Aorta (tissue), 5 donors: ENCODE measurements at regions of chr17 and their contacts with region 1.

Region 1: GRCh38 chr17:48024937-48025906 is 12.4 kb downstream of the COPZ2 start:
- DNase-seq: peak; percentile 99
- ATAC-seq: peak; percentile 94
- H3K4me3 ChIP-seq: no peak overlapping the region
- H3K27ac ChIP-seq: peak overlapping the region in 1 of 2 donors; percentile 4
- H3K4me1 ChIP-seq: no peaks in the 10 kb centered on the region
- H3K27me3 ChIP-seq: no peaks in the 10 kb centered on the region

Region 2: GRCh38 chr17:47840740-47841603 is 184.2 kb before region 1 on chr17 and contains the start of gene SCRN2:
- intact Hi-C with region 1: loop called in 1 of 2 experiments (anchors 5 kb)
- DNase-seq: peak; percentile 92 to 96
- ATAC-seq: peak; percentile 95
- H3K4me3 ChIP-seq: peak within 1 kb of the TSS; percentile 36 to 54
- H3K27ac ChIP-seq: no peak within 1 kb of the TSS
- H3K4me1 ChIP-seq: no peaks in the 10 kb centered on the region
- H3K27me3 ChIP-seq: no peaks in the 10 kb centered on the region
- total RNA-seq, gene SCRN2: 19.3 to 37.6 TPM

Region 3: GRCh38 chr17:47929218-47930000 is 95.8 kb before region 1 on chr17:
- intact Hi-C with region 1: no loop called
- DNase-seq: peak in 1 of 2 donors; percentile 46
- ATAC-seq: no peak
- H3K4me3 ChIP-seq: no peak overlapping the region
- H3K27ac ChIP-seq: no peak overlapping the region
- H3K4me1 ChIP-seq: no peaks in the 10 kb centered on the region
- H3K27me3 ChIP-seq: no peaks in the 10 kb centered on the region

Region 4: GRCh38 chr17:47978324-47978723 is 46.9 kb before region 1 on chr17:
- intact Hi-C with region 1: loop called in 1 of 2 experiments (anchors 5 kb)
- DNase-seq: peak; percentile 72 to 79
- ATAC-seq: peak; percentile 46
- H3K4me3 ChIP-seq: no peak overlapping the region
- H3K27ac ChIP-seq: no peak overlapping the region
- H3K4me1 ChIP-seq: no peaks in the 10 kb centered on the region
- H3K27me3 ChIP-seq: no peaks in the 10 kb centered on the region

Region 5: DNA sequence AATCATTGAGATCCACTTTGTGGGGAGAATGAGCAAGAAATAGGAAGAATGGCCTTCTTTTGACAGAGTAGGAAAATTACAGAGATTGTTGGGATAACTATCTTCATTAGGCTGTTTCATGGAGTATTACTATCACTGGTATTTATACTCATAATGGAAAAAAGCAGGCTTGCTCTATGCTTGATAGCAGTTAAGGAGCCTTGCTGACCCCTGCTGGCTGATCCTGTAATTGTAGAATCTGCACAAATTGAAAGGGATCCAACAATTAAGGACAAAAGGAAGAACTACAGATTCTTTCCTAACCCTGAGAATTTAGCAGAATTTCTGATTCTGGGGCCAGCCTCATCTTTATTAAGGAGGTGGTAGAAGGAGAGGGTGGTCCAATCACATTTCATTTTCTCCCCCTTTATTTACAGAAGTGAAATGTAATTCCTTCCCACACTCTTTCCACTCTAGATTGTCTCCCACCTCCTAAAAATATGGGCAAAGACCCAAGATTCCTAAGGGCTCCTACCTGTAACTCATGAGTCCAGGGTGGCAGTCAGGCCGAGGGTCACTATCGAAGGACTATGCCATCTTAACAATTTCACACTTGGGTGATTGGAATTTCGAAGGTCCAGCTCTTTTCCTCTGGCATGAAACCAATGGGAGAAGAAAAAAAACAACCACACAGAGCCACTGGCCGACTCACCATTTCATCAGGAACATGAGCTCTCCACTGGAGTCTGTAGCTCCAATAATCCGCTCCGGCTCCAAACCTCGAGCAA is 49.3 kb after region 1 on chr17:
- intact Hi-C with region 1: loop called (anchors 1 kb)
- DNase-seq: peak; percentile 82 to 86
- ATAC-seq: peak; percentile 85
- H3K4me3 ChIP-seq: no peak overlapping the region
- H3K27ac ChIP-seq: no peak overlapping the region
- H3K4me1 ChIP-seq: no peaks in the 10 kb centered on the region
- H3K27me3 ChIP-seq: no peaks in the 10 kb centered on the region

Region 6: GRCh38 chr17:48593840-48594537 is 568.8 kb after region 1 on chr17:
- intact Hi-C with region 1: loop called in 1 of 2 experiments (anchors 10 kb)
- DNase-seq: peak; percentile 88 to 95
- ATAC-seq: peak; percentile 88
- H3K4me3 ChIP-seq: no peak overlapping the region
- H3K27ac ChIP-seq: no peak overlapping the region
- H3K4me1 ChIP-seq: no peaks in the 10 kb centered on the region
- H3K27me3 ChIP-seq: no peaks in the 10 kb centered on the region